IMR-90 (cell line): ENCODE measurements at regions of chr4 and their contacts with region 1.

Region 1: DNA sequence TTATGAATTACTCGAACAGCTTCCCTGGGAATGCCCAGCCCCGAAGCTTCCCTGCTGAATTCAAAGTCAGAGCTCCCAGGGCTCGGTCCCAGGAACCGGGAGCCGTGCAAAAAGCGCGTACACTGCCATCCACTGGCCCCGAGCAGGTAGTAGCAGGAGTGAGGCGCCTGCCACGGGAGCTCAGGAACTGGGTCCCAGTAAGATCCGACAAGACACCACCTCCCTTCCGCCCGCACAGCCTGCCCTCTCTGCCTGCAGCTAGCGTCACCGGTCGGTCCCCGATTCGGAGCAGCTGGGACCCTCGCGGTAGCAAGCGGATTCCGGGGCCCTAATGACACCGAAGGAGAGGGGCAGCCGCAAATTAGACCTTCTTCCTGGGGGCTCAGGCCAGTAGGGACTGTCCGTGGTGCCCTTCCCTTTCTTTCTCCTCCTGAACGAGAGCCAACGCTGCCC is 1.2 kb downstream of the CORIN start:
- DNase-seq: peak; percentile 84
- ATAC-seq: peak; percentile 95
- H3K4me3 ChIP-seq: peak overlapping the region; percentile 51
- H3K27ac ChIP-seq: peak overlapping the region; percentile 10; the same call in 1 of the 2 replicates
- H3K4me1 ChIP-seq: peaks cover 12% of the 10 kb centered on the region
- H3K27me3 ChIP-seq: no peaks in the 10 kb centered on the region
- CTCF ChIP-seq: peak; percentile 87
- POLR2A ChIP-seq: no peak
- RAD21 ChIP-seq: peak; percentile 81

Region 2: DNA sequence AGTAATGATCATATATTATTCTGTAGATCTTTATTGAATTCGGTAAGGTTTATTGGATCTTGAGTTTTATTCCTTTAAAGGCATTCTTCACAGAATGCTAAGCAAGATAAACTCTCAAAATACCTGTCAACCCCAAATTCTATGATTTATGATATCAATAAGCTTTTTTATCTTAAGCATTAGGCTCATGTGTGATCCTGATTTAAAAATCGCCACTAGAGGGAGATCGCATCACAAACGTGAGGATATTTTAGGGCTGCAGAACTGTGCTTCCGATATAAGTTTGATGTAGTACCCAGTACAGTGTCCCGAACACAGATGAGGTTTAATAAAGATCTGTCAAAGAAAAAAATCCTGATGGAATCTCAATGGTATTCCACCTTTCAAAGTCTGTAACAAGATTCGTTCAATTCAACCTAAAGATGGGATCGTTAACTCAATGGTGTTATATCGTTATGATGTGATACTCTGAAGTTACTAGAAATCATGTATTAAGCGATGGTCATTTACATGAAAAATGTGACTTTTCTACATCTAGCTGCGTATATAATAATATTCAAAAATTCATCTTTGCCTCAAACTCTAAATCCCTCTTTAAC is 167.8 kb before region 1 on chr4:
- CTCF ChIA-PET with region 1: interaction called, 4 read pairs
- POLR2A ChIA-PET with region 1: no interaction called
- dilution Hi-C with region 1: no loop called
- in situ Hi-C with region 1: no loop called
- intact Hi-C with region 1: loop called (anchors 1 kb)
- DNase-seq: peak; percentile 65
- ATAC-seq: peak; percentile 87
- H3K4me3 ChIP-seq: no peak overlapping the region
- H3K27ac ChIP-seq: no peak overlapping the region
- H3K4me1 ChIP-seq: no peaks in the 10 kb centered on the region
- H3K27me3 ChIP-seq: peaks cover 5% of the 10 kb centered on the region
- CTCF ChIP-seq: peak; percentile 68
- POLR2A ChIP-seq: no peak
- RAD21 ChIP-seq: peak; percentile 63

Region 3: GRCh38 chr4:47698837-47699236 is 137.8 kb before region 1 on chr4:
- CTCF ChIA-PET with region 1: interaction called, 12 read pairs
- POLR2A ChIA-PET with region 1: no interaction called
- dilution Hi-C with region 1: no loop called
- in situ Hi-C with region 1: loop called (anchors 10 kb)
- intact Hi-C with region 1: no loop called
- DNase-seq: no peak
- ATAC-seq: no peak
- H3K4me3 ChIP-seq: no peak overlapping the region
- H3K27ac ChIP-seq: no peak overlapping the region
- H3K4me1 ChIP-seq: no peaks in the 10 kb centered on the region
- H3K27me3 ChIP-seq: peaks cover 12% of the 10 kb centered on the region
- CTCF ChIP-seq: no peak
- POLR2A ChIP-seq: no peak
- RAD21 ChIP-seq: no peak

Region 4: GRCh38 chr4:47882228-47882627 is 45.6 kb after region 1 on chr4:
- CTCF ChIA-PET with region 1: interaction called, 3 read pairs
- POLR2A ChIA-PET with region 1: no interaction called
- dilution Hi-C with region 1: no loop called
- in situ Hi-C with region 1: no loop called
- intact Hi-C with region 1: loop called (anchors 5 kb)
- DNase-seq: peak; percentile 33
- ATAC-seq: peak; percentile 77
- H3K4me3 ChIP-seq: no peak overlapping the region
- H3K27ac ChIP-seq: peak overlapping the region; percentile 1; the same call in 1 of the 2 replicates
- H3K4me1 ChIP-seq: peaks cover 2% of the 10 kb centered on the region; the same call in 1 of the 2 replicates
- H3K27me3 ChIP-seq: no peaks in the 10 kb centered on the region
- CTCF ChIP-seq: no peak
- POLR2A ChIP-seq: no peak
- RAD21 ChIP-seq: no peak